ENCODE measurements at regions of chr5 and their contacts with region 1.

Region 1: GRCh38 chr5:129125810-129126209 is 31.3 kb downstream of the ISOC1 start:
- DNase-seq: no peak
- H3K4me3 ChIP-seq: no peak overlapping the region
- H3K27ac ChIP-seq: no peak overlapping the region
- H3K4me1 ChIP-seq: no peaks in the 10 kb centered on the region
- CTCF ChIP-seq: peak; percentile 30; the same call in 1 of the 2 replicates

Region 2: GRCh38 chr5:128905571-128906110 is 220.2 kb before region 1 on chr5:
- CTCF ChIA-PET with region 1: no interaction called
- POLR2A ChIA-PET with region 1: no interaction called
- intact Hi-C with region 1: loop called (anchors 10 kb)
- DNase-seq: peak; percentile 51
- H3K4me3 ChIP-seq: no peak overlapping the region
- H3K27ac ChIP-seq: no peak overlapping the region
- H3K4me1 ChIP-seq: no peaks in the 10 kb centered on the region
- CTCF ChIP-seq: peak; percentile 91